ENCODE measurements at regions of chr16 and their contacts with region 1.

Region 1: DNA sequence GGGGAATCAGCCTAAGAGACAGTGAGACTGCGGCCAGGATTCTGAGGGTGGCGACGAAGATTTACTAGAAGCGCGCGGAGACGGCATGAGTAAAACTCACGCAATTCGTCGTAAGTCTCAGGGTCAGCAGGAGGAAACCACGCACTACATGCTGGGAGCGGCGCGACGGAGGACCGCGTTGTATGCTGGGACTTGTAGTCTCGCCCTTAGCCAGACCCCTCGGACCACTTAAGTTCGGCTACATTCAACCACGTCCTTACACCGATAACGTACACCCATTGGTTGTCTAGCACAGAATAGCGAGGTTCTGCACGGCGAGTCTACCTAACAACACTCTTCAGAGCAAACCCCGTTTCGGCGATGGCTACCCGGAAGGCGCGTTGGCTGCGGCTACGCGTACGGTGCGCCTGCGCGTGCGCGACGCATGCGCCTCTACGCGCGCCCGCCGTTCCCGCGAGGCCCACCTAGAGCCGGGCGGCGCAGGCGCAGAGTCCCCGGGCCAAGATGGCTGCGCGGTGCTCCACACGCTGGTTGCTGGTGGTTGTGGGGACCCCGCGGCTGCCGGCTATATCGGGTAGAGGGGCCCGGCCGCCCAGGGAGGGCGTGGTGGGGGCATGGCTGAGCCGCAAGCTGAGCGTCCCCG is at the start of gene DNAJA3:
- DNase-seq: peak; percentile 92 to 96
- ATAC-seq: peak; percentile 96 to 97 (median 97)
- H3K4me3 ChIP-seq: peak within 1 kb of the TSS; percentile 99
- H3K27ac ChIP-seq: peak within 1 kb of the TSS; percentile 99
- H3K4me1 ChIP-seq: peaks cover 18% of the 10 kb centered on the region
- H3K27me3 ChIP-seq: no peaks in the 10 kb centered on the region
- CTCF ChIP-seq: no peak
- total RNA-seq, gene DNAJA3: 77.4 to 110 (median 80.5) TPM

Region 2: GRCh38 chr16:4475880-4476788 is 50.6 kb after region 1 on chr16 and contains the start of gene HMOX2:
- intact Hi-C with region 1: loop called in 1 of 2 experiments (anchors 10 kb)
- DNase-seq: peak; percentile 92 to 96
- ATAC-seq: peak; percentile 98 to 99 (median 98)
- H3K4me3 ChIP-seq: peak within 1 kb of the TSS; percentile 94
- H3K27ac ChIP-seq: peak within 1 kb of the TSS; percentile 89
- H3K4me1 ChIP-seq: peaks cover 11% of the 10 kb centered on the region
- H3K27me3 ChIP-seq: peaks cover 0 to 14% (median 0%) of the 10 kb centered on the region in 3 donors
- CTCF ChIP-seq: peak; percentile 38
- total RNA-seq, gene HMOX2: 20.8 to 26.6 (median 22.6) TPM

Measured in psoas muscle (tissue), 8 donors.